ENCODE measurements at regions of chr6 and their contacts with region 1.

Region 1: DNA sequence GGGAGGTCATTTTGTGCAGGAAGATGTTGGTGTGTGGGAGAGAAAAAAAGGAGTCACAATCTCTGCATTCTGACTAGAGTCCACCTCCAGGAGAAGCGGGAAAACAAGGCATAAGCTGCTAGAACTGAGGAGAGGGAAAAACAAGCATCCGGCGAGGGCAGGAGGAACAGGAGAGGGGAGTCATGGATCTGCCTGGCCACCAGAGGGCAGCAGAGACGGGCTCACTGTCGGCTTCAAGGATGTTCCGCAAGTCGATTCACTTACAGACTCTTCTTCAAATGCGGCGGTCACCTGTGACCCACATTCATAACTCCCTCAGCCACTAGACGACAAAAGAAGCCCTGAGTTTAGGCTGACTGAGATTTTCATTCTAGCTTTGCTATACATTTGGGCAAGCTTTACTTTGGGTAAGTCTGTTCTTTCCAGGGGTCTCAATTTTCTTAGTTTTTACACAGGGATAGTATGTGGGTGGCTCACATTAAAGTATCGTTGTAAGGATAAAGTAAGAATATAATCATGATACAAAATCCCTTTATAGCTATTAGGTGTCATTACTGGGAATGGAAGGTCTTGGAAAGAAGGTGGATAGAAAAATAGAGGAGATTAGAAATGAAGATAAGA is 6.6 kb upstream of the BTNL2 start:
- DNase-seq: peak; percentile 81
- ATAC-seq: peak; percentile 84

Region 2: DNA sequence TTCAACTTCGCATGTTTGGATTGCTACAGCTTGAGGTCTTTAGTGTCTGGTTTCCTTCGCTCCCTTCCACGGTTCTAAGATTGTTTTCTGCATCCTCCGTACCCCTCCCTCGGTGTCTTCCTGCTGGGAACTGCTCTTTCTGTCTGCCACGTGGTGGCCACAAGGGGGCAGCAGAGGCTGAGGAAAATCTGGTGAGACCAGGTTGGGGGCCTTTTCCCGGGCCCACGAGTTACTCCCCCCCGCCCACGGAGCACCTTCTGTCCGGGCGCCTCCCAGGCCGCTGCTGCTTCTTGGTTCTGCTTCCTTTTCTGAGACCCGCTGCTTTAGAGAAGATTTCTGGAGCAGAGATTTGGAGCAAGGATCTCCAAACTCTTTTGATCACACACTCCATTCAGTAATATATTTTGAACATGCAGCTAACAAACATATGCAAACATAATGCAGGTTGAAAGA is 168.6 kb before region 1 on chr6:
- intact Hi-C with region 1: loop called (anchors 10 kb)
- DNase-seq: peak; percentile 86
- ATAC-seq: peak; percentile 95

Region 3: DNA sequence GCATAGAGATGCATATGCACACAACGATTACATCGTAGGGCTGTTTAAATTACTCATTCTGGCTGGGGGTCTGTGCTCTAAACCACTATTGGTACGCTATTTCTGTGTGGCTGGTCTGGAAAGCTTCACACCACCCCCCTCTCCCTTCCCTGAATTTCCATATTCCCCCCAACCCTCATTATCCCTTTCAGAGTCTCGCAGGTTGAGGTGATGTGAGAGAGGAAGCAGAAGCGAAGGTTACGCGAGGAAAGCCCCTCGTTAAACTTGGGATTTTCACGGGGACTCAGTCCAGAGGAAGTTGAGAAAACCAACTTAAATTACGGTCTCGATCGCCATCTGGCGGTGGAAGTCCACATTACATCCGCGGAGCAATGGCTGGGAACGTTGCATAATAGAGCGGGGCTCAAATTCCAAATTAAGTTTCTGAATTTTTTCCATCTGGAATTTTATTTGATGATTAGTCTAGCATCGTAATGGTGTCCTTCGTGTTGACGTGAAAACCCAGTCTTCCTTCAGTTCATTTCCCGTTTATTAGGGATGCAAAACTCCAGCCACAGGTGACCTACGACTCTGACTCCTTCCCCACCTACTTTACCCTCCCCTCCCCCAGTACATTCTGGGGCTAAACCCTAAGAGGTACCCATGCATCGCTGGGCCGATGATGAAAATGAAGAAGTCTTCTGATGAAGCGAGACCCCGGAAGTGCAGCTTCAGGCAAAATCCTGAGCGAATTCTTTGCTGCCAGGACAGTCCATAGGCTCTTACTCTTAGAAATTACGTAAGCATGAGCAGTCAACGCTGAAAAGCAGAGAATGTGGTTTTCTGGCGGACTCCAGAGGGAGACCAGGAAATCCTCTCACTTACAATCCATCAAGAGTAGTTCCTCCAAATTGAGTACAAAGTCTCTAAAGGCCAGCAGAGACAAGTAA is 383.6 kb after region 1 on chr6:
- intact Hi-C with region 1: loop called (anchors 10 kb)
- DNase-seq: peak; percentile 85
- ATAC-seq: peak; percentile 76

Region 4: GRCh38 chr6:32868257-32868788 is 454.8 kb after region 1 on chr6:
- intact Hi-C with region 1: loop called (anchors 10 kb)
- DNase-seq: peak; percentile 82
- ATAC-seq: peak; percentile 72